CD8-positive, alpha-beta memory T cell (primary cell): ENCODE measurements at regions of chr6 and their contacts with region 1.

Region 1: GRCh38 chr6:3183066-3183465 is 25.7 kb upstream of the TUBB2A start:
- DNase-seq: no peak
- H3K4me3 ChIP-seq: no peak overlapping the region
- H3K4me3 Mint-ChIP-seq: no peak overlapping the region
- H3K27ac ChIP-seq: no peak overlapping the region
- H3K27ac Mint-ChIP-seq: no peak overlapping the region
- H3K4me1 ChIP-seq: no peaks in the 10 kb centered on the region
- H3K4me1 Mint-ChIP-seq: no peaks in the 10 kb centered on the region
- H3K27me3 ChIP-seq: no peaks in the 10 kb centered on the region
- H3K27me3 Mint-ChIP-seq: peaks cover 22 to 43% of the 10 kb centered on the region in 2 donors

Region 2: DNA sequence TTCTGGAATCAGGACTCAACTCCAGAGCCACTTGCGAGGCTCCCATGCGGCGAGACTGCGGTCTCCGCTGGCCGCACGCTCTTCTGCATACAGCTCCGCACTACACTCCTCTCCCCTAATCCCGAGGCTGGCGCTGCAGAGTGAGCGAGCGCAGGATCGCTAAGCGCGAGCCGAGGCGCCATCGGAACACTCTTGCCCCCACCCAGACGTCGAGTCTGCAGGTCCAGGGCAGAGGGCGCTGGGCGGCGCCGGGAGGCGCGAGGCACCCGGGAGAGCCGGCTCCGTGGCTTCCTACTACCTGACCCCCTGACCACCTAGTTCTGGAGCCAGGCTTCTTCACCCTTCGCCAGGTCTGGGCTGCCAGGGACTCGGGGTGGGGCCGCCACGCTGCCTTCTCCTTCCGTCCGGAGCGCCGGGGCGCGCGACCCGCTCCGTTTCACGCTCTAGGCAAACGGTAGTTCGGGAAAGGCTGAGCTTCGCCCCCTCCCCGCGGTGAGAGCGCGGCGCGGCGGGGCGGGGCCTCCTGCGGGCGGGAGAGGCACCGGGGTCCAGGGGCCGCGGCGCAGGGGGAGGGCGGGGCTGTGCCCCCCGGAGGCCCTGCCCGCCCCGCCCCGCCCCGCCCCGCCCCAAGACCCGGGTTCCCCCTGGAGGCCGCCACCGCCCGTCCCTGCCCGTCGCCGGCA is 20.4 kb before region 1 on chr6:
- CTCF ChIA-PET with region 1: no interaction called
- POLR2A ChIA-PET with region 1: interaction called, 10 read pairs
- DNase-seq: peak; percentile 60 to 77 (median 63)
- H3K4me3 ChIP-seq: peak overlapping the region; percentile 74
- H3K4me3 Mint-ChIP-seq: peak overlapping the region; percentile 83 to 93 (median 88)
- H3K27ac ChIP-seq: peak overlapping the region; percentile 90
- H3K27ac Mint-ChIP-seq: peak overlapping the region; percentile 20 to 96 (median 82)
- H3K4me1 ChIP-seq: peaks cover 28% of the 10 kb centered on the region
- H3K4me1 Mint-ChIP-seq: peaks cover 35 to 48% (median 46%) of the 10 kb centered on the region in 3 donors
- H3K27me3 ChIP-seq: no peaks in the 10 kb centered on the region
- H3K27me3 Mint-ChIP-seq: no peaks in the 10 kb centered on the region